ENCODE measurements at regions of chr7 and their contacts with region 1.

Region 1: GRCh38 chr7:89622838-89623672 is 531.2 kb upstream of the STEAP1 start:
- DNase-seq: peak in 7 of 9 donors; percentile 23 to 61 (median 53)
- ATAC-seq: peak; percentile 82
- H3K4me3 ChIP-seq: no peak overlapping the region
- H3K4me3 Mint-ChIP-seq: peak overlapping the region in 9 of 10 donors; percentile 21 to 70 (median 49)
- H3K27ac ChIP-seq: no peak overlapping the region
- H3K27ac Mint-ChIP-seq: peak overlapping the region in 5 of 9 donors; percentile 6 to 80 (median 35)
- H3K4me1 ChIP-seq: peaks cover 0 to 16% of the 10 kb centered on the region in 2 donors
- H3K4me1 Mint-ChIP-seq: peaks cover 18 to 40% (median 35%) of the 10 kb centered on the region in 7 donors
- H3K27me3 ChIP-seq: no peaks in the 10 kb centered on the region
- H3K27me3 Mint-ChIP-seq: peaks cover 0 to 7% (median 0%) of the 10 kb centered on the region in 5 donors

Region 2: DNA sequence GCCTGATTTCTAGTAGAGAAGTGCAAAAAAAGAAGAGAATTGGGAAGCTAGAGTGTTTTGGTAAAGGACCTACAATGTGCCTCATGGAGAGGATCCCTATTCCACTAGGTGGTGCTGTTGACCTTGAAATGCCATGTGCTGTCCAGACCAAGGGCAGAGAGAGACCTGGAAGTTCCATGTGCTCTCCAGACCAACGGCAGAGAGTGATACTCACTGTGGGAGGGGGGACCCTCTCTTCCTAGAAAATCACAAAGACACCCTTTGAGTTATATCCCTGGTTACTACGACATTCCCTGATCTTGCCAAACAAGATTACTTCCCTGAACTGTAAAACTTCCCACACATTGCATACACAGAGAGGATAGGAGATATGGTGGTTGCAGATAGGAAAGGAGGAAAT is 1076.2 kb before region 1 on chr7:
- CTCF ChIA-PET with region 1: no interaction called
- POLR2A ChIA-PET with region 1: no interaction called
- intact Hi-C with region 1: loop called in 1 of 2 experiments (anchors 5 kb)
- DNase-seq: peak in 1 of 9 donors; percentile 3
- ATAC-seq: no peak
- H3K4me3 ChIP-seq: no peak overlapping the region
- H3K4me3 Mint-ChIP-seq: no peak overlapping the region
- H3K27ac ChIP-seq: no peak overlapping the region
- H3K27ac Mint-ChIP-seq: no peak overlapping the region
- H3K4me1 ChIP-seq: no peaks in the 10 kb centered on the region
- H3K4me1 Mint-ChIP-seq: no peaks in the 10 kb centered on the region
- H3K27me3 ChIP-seq: no peaks in the 10 kb centered on the region
- H3K27me3 Mint-ChIP-seq: peaks cover 0 to 5% (median 0%) of the 10 kb centered on the region in 5 donors

Region 3: DNA sequence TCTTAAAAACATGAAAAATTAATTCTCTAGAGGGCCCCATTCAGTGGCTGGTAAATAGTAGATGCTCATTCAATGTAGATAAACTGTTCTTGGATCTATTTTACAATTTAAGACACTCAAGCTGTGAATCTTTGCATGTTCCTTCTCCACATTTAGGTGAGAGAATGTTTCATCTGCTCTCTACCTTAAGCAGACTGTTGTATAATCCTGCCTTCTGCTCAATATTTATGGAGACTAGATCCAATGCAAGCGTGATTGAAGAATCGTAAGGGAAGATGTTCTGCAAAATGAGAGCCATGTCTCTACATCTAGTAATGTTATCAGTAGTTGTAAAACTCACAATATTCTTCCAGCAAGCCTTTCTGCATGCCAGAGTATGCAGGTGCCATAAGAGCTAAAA is 712.5 kb before region 1 on chr7:
- CTCF ChIA-PET with region 1: no interaction called
- POLR2A ChIA-PET with region 1: no interaction called
- intact Hi-C with region 1: loop called in 1 of 2 experiments (anchors 2 kb)
- DNase-seq: no peak
- ATAC-seq: no peak
- H3K4me3 ChIP-seq: no peak overlapping the region
- H3K4me3 Mint-ChIP-seq: no peak overlapping the region
- H3K27ac ChIP-seq: no peak overlapping the region
- H3K27ac Mint-ChIP-seq: no peak overlapping the region
- H3K4me1 ChIP-seq: no peaks in the 10 kb centered on the region
- H3K4me1 Mint-ChIP-seq: no peaks in the 10 kb centered on the region
- H3K27me3 ChIP-seq: no peaks in the 10 kb centered on the region
- H3K27me3 Mint-ChIP-seq: no peaks in the 10 kb centered on the region

Region 4: DNA sequence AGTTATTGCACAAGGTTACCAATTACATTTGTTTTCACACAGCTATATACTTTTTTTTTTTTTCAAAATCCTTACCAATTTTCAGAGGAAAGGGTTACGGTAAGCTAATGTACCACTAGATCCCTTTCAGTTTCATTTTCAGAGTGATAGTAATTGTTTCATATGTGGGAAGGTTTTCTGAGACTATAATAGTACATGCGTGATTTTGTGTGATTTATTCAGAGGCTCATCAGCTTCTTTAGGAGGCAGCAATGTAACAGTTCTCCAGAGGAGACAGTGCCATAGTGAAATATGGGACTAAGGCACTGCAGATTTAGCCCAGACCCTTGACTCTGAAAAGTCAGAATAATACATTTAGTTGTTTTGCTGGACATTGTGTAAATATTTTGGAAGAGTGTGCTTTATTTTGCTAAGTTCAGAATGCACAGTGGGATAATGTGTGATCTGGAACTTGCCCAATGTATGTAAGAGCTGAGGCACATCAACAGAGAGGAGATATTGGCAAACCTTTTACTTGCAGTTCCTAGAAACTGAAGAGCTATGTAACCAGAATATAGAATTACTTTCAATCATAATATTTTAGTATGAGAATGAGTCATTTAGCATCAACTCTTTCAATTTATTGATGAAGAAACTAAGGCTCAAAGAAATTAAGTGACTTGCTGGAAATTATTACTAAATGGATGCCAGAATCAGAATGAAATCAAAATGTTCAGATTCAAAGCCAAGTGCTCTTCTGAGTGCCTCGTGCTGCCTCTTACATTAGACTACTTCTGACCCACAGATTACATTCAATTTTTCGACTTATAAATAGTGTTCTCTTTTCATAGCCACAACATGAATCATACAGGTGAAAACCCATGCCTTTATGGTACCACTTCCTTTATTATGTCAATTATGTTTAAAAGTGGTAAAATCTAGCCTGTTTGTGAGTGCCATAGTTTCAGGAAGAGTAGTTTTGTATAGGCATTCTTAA is 619.8 kb before region 1 on chr7:
- CTCF ChIA-PET with region 1: no interaction called
- POLR2A ChIA-PET with region 1: no interaction called
- intact Hi-C with region 1: loop called in 1 of 2 experiments (anchors 5 kb)
- DNase-seq: peak in 3 of 9 donors; percentile 7 to 22 (median 17)
- ATAC-seq: peak; percentile 53
- H3K4me3 ChIP-seq: peak overlapping the region; percentile 54
- H3K4me3 Mint-ChIP-seq: peak overlapping the region; percentile 63 to 90 (median 86)
- H3K27ac ChIP-seq: peak overlapping the region; percentile 33
- H3K27ac Mint-ChIP-seq: peak overlapping the region; percentile 40 to 89 (median 78)
- H3K4me1 ChIP-seq: no peaks in the 10 kb centered on the region
- H3K4me1 Mint-ChIP-seq: peaks cover 10 to 26% (median 19%) of the 10 kb centered on the region in 7 donors
- H3K27me3 ChIP-seq: no peaks in the 10 kb centered on the region
- H3K27me3 Mint-ChIP-seq: peaks cover 0 to 6% (median 0%) of the 10 kb centered on the region in 5 donors

Region 5: GRCh38 chr7:89334797-89335196 is 288.3 kb before region 1 on chr7:
- CTCF ChIA-PET with region 1: no interaction called
- POLR2A ChIA-PET with region 1: no interaction called
- intact Hi-C with region 1: loop called (anchors 1 to 5 kb)
- DNase-seq: no peak
- ATAC-seq: no peak
- H3K4me3 ChIP-seq: no peak overlapping the region
- H3K4me3 Mint-ChIP-seq: no peak overlapping the region
- H3K27ac ChIP-seq: no peak overlapping the region
- H3K27ac Mint-ChIP-seq: peak overlapping the region in 1 of 9 donors; percentile 4
- H3K4me1 ChIP-seq: no peaks in the 10 kb centered on the region
- H3K4me1 Mint-ChIP-seq: peaks cover 0 to 9% (median 0%) of the 10 kb centered on the region in 7 donors
- H3K27me3 ChIP-seq: no peaks in the 10 kb centered on the region
- H3K27me3 Mint-ChIP-seq: no peaks in the 10 kb centered on the region

Region 6: DNA sequence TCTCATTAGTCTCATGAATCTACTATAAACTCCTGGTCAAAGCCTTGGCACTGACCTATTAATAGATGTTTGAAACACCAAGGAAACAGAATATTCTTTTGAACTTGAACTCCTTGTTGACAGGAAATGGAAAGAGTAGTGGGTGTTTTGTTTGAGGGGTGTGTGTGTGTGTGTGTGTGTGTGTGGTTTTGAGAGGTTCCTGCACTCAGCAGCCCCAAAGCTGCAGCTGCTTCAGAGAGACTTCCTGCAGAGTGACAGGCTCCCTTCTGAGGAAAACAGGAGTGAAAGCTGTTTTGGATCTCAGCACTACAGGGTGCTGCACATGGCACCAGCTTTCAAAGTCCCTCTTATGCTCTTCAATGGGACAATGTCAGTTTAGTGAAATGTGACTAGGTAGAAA is 15.3 kb before region 1 on chr7:
- CTCF ChIA-PET with region 1: interaction called, 8 read pairs
- POLR2A ChIA-PET with region 1: interaction called, 4 read pairs
- intact Hi-C with region 1: loop called (anchors 1 kb)
- DNase-seq: peak in 8 of 9 donors; percentile 43 to 76 (median 66)
- ATAC-seq: peak; percentile 68
- H3K4me3 ChIP-seq: no peak overlapping the region
- H3K4me3 Mint-ChIP-seq: peak overlapping the region; percentile 61 to 78 (median 68)
- H3K27ac ChIP-seq: peak overlapping the region; percentile 66
- H3K27ac Mint-ChIP-seq: peak overlapping the region; percentile 76 to 96 (median 85)
- H3K4me1 ChIP-seq: peaks cover 0 to 65% of the 10 kb centered on the region in 2 donors
- H3K4me1 Mint-ChIP-seq: peaks cover 27 to 91% (median 85%) of the 10 kb centered on the region in 7 donors
- H3K27me3 ChIP-seq: no peaks in the 10 kb centered on the region
- H3K27me3 Mint-ChIP-seq: peaks cover 0 to 2% (median 0%) of the 10 kb centered on the region in 5 donors

Region 7: DNA sequence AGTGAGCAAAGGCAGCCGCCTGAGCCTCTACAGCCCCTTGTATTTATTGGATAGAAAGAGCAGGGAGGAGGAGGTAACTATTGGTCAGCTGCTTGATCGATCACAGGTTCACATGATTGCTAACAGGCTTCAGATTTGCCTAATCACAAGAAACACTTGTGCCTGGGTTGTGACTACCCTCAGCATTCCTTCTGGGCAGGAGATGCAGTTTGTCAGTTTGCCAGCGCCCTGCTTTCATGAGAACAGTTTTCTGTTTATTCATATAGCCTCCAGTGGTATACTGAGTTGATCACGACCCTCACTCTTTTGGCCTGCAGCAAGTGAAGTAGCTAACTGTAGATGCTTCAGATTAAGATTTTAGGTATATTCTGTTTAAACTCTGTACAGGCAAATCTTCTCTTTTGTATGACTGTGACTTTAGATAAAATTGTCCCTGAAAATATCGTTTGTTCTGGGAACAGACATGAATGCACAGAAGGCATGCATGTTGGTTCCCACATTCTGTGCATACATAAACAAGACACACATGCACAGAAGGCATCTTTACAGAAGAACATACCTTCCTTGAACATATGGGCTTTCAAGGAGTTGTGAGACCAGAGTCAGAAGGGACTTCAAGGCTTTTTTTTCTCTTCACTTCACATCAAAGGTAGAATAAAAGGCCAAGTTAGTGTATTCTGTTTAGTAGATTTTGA is 108.8 kb after region 1 on chr7:
- CTCF ChIA-PET with region 1: no interaction called
- POLR2A ChIA-PET with region 1: no interaction called
- intact Hi-C with region 1: no loop called
- DNase-seq: no peak
- ATAC-seq: no peak
- H3K4me3 ChIP-seq: no peak overlapping the region
- H3K4me3 Mint-ChIP-seq: no peak overlapping the region
- H3K27ac ChIP-seq: no peak overlapping the region
- H3K27ac Mint-ChIP-seq: no peak overlapping the region
- H3K4me1 ChIP-seq: no peaks in the 10 kb centered on the region
- H3K4me1 Mint-ChIP-seq: no peaks in the 10 kb centered on the region
- H3K27me3 ChIP-seq: no peaks in the 10 kb centered on the region
- H3K27me3 Mint-ChIP-seq: peaks cover 0 to 5% (median 0%) of the 10 kb centered on the region in 5 donors